ENCODE measurements at regions of chr2 and their contacts with region 1.

Region 1: GRCh38 chr2:112692496-112692911 is 28.3 kb upstream of the NT5DC4 start:
- DNase-seq: peak in 8 of 9 experiments; percentile 20 to 74 (median 51)
- ATAC-seq: peak; percentile 64
- H3K4me3 ChIP-seq: no peak overlapping the region
- H3K4me3 Mint-ChIP-seq: no peak overlapping the region
- H3K27ac ChIP-seq: peak overlapping the region in 1 of 2 experiments; percentile 73
- H3K27ac Mint-ChIP-seq: peak overlapping the region; percentile 60
- H3K4me1 ChIP-seq: peaks cover 17% of the 10 kb centered on the region
- H3K4me1 Mint-ChIP-seq: peaks cover 24% of the 10 kb centered on the region
- H3K27me3 ChIP-seq: no peaks in the 10 kb centered on the region
- H3K27me3 Mint-ChIP-seq: no peaks in the 10 kb centered on the region
- CTCF ChIP-seq: no peak

Region 2: DNA sequence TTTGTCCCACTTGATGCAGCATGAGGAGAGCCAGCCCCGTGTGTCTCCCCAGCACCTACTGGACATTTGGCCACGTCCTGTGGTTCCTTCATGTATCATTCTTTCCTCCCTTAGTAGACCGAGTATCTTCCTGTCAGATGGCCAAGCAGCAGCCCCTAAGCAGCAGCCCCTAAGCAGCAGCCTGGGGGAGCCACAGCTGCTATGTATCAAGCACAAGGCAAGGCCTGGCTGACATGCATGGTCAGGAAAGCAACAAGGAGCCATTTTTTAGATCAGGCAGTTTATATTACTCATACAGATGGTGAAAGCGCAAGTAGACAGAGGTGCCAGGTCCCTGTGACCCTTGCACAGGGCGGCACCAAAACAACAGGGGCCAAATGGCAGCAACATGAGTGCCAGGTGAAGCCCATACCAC is 86.0 kb before region 1 on chr2:
- CTCF ChIA-PET with region 1: interaction called, 48 read pairs
- POLR2A ChIA-PET with region 1: no interaction called
- intact Hi-C with region 1: no loop called
- DNase-seq: no peak
- ATAC-seq: no peak
- H3K4me3 ChIP-seq: no peak overlapping the region
- H3K4me3 Mint-ChIP-seq: no peak overlapping the region
- H3K27ac ChIP-seq: no peak overlapping the region
- H3K27ac Mint-ChIP-seq: no peak overlapping the region
- H3K4me1 ChIP-seq: no peaks in the 10 kb centered on the region
- H3K4me1 Mint-ChIP-seq: no peaks in the 10 kb centered on the region
- H3K27me3 ChIP-seq: no peaks in the 10 kb centered on the region
- H3K27me3 Mint-ChIP-seq: no peaks in the 10 kb centered on the region
- CTCF ChIP-seq: no peak

Region 3: GRCh38 chr2:112645310-112646101 is 47.0 kb before region 1 on chr2 and contains the start of gene SLC20A1:
- CTCF ChIA-PET with region 1: interaction called, 13 read pairs
- POLR2A ChIA-PET with region 1: interaction called, 3 read pairs
- intact Hi-C with region 1: loop called in 1 of 2 experiments (anchors 1 kb)
- DNase-seq: peak; percentile 96 to 100 (median 98)
- ATAC-seq: peak; percentile 91
- H3K4me3 ChIP-seq: peak within 1 kb of the TSS; percentile 84 to 90
- H3K4me3 Mint-ChIP-seq: peak within 1 kb of the TSS; percentile 85
- H3K27ac ChIP-seq: peak within 1 kb of the TSS; percentile 91
- H3K27ac Mint-ChIP-seq: peak within 1 kb of the TSS; percentile 89
- H3K4me1 ChIP-seq: peaks cover 50% of the 10 kb centered on the region
- H3K4me1 Mint-ChIP-seq: peaks cover 56% of the 10 kb centered on the region
- H3K27me3 ChIP-seq: no peaks in the 10 kb centered on the region
- H3K27me3 Mint-ChIP-seq: no peaks in the 10 kb centered on the region
- CTCF ChIP-seq: peak; percentile 55
- total RNA-seq, gene SLC20A1: 144 to 145 TPM

Region 4: DNA sequence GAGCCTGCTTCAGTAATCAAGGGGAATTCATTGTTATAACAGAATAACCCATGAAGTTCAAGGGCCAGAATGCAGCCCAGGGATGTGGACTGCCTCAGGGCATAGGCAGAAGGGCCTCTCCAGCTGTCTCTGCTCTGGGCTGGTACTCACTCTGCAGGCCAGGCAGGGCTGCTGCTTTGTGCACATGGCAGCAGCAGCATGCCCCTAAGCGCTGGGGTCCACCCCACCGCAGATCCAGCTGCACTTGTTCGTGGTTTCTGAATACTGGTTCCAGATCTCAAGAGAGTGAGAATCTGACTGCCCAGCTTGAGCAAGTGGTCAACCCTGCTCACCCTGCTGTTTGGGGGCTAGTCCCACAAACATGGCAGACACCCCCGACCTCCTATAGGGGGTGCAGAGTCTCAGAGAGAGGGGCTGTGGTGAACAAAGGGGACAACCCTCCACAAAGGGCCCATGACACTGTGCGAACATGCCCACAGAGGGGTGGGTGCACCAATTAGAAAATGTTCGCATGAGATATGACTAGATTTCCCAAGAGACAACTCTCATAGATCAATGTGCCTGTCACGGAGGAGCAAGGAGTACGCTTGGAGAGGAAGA is 1284.7 kb after region 1 on chr2:
- CTCF ChIA-PET with region 1: no interaction called
- POLR2A ChIA-PET with region 1: no interaction called
- intact Hi-C with region 1: no loop called
- DNase-seq: no peak
- ATAC-seq: no peak
- H3K4me3 ChIP-seq: no peak overlapping the region
- H3K4me3 Mint-ChIP-seq: no peak overlapping the region
- H3K27ac ChIP-seq: no peak overlapping the region
- H3K27ac Mint-ChIP-seq: no peak overlapping the region
- H3K4me1 ChIP-seq: no peaks in the 10 kb centered on the region
- H3K4me1 Mint-ChIP-seq: peaks cover 4% of the 10 kb centered on the region
- H3K27me3 ChIP-seq: no peaks in the 10 kb centered on the region
- H3K27me3 Mint-ChIP-seq: no peaks in the 10 kb centered on the region
- CTCF ChIP-seq: no peak

Measured in CD8-positive, alpha-beta T cell (primary cell).